ENCODE measurements at regions of chr1 and their contacts with region 1.

Region 1: DNA sequence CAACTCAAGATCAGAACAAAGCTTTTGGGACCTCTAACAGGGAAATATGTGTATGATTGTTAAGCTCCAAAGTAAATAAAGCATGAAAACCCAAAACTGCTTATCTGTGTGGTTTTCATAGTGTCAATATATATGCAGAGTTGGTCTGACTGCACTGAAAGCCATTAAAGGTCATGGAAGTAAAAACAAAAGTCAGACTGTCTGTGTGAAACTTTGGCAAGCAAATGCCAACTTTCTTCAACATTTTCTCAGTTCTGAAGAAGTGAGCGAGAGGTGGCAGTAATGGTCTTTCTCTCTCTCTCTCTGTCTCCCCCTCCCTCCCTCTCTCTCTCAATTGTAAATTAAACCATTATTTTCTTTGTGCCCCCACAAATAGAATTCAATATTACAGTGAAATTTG is 100.1 kb upstream of the S1PR1 start:
- DNase-seq: no peak
- H3K4me3 ChIP-seq: no peak overlapping the region
- H3K4me3 Mint-ChIP-seq: no peak overlapping the region
- H3K27ac Mint-ChIP-seq: no peak overlapping the region
- H3K4me1 ChIP-seq: no peaks in the 10 kb centered on the region
- H3K4me1 Mint-ChIP-seq: peaks cover 6% of the 10 kb centered on the region
- H3K27me3 ChIP-seq: no peaks in the 10 kb centered on the region
- H3K27me3 Mint-ChIP-seq: peaks cover 2% of the 10 kb centered on the region
- CTCF ChIP-seq: no peak

Region 2: DNA sequence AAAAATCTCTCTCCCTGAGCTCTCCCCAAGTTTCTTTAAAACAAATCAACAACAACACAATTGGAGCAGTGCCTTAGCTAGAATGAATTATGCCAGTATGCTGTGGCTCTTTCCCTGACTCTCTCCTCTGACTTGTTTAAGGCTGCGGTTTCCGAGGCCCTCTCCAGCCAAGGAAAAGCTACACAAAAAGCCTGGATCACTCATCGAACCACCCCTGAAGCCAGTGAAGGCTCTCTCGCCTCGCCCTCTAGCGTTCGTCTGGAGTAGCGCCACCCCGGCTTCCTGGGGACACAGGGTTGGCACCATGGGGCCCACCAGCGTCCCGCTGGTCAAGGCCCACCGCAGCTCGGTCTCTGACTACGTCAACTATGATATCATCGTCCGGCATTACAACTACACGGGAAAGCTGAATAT is 101.9 kb after region 1 on chr1:
- CTCF ChIA-PET with region 1: no interaction called
- POLR2A ChIA-PET with region 1: no interaction called
- intact Hi-C with region 1: loop called (anchors 5 kb)
- DNase-seq: peak; percentile 69 to 77
- H3K4me3 ChIP-seq: no peak overlapping the region
- H3K4me3 Mint-ChIP-seq: no peak overlapping the region
- H3K27ac Mint-ChIP-seq: no peak overlapping the region
- H3K4me1 ChIP-seq: 0 out of 2 replicates have a peak, but pooled peaks cover 5% of the 10 kb centered on the region
- H3K4me1 Mint-ChIP-seq: peaks cover 12% of the 10 kb centered on the region
- H3K27me3 ChIP-seq: no peaks in the 10 kb centered on the region; the same call in 1 of the 2 replicates
- H3K27me3 Mint-ChIP-seq: peaks cover 20% of the 10 kb centered on the region
- CTCF ChIP-seq: peak; percentile 70 to 75

Measured in Caco-2 (cell line).